ENCODE measurements at regions of chr17 and their contacts with region 1.

Region 1: DNA sequence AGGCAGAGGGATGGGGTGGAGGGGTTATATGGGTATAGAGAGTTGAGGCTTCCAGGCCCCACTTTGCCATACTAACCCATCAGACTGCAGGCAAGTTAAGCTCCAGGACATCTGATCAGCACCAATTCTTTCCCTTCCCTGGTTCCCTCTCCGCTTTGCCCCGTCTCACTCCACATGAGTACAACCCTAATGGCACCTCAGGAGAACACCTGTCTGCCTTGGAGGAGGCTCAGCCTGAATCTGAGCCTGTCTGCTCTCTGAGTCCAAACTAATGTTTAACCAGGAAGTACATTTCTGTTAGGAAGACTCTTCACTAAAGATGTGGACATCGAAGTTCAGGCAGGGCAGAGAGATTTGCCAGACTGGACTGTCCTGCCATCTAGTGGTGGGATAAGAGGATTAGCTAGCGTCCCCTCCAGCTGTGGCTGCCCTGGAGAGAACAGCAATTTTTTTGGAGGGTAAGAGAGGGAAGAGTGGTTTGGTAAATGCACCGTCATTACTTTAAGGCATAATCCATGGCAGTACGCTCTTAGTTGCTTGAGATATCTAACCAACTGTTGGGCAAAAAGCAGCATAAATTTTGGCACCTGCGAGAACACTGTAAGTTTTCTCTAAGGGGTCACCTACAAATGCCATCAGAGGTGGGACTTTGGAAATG is 29.2 kb upstream of the LRRC75A start:
- DNase-seq: peak; percentile 57
- H3K4me3 ChIP-seq: no peak overlapping the region
- CTCF ChIP-seq: peak; percentile 78

Region 2: GRCh38 chr17:16363749-16364536 is 157.3 kb before region 1 on chr17:
- CTCF ChIA-PET with region 1: interaction called, 106 read pairs
- POLR2A ChIA-PET with region 1: no interaction called
- DNase-seq: no peak
- H3K4me3 ChIP-seq: no peak overlapping the region
- CTCF ChIP-seq: peak; percentile 79

Region 3: DNA sequence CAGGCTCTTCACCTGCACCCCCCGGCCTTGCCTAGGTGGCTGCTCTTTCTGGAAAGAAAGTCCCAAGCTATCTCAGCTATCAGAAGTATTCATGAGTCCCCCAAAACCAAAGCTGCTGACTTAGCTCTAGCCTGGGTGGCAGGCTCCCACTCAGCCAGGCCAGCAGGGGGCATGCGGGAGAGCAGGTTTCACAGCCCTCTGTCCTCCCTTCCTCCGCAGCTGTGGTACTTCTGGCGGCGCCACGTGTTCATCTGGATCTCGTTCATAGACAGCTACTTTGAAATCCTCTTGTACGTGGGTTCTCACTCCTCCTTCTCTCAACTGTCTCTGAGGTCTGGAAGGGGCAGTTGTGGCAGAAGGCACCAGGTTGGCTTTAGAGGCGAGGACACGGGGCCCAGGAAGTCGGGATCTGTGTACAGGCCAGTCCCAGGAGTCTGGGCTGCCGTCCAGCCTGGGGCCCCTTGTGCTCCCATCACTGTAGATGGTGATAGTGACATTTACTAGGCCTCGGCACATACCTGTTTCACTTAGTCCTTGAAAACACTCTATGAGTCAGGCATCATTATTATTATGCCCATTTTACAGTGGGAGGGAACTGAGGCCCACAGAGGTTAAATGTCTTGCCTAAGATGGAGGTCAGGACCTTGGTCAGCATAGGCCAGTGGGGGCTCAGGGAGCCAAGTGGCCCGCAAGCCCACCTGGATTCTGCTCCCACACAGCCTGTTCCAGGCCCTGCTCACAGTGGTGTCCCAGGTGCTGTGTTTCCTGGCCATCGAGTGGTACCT is 92.9 kb before region 1 on chr17:
- CTCF ChIA-PET with region 1: interaction called, 34 read pairs
- POLR2A ChIA-PET with region 1: no interaction called
- DNase-seq: no peak
- H3K4me3 ChIP-seq: no peak overlapping the region
- CTCF ChIP-seq: peak; percentile 87

Region 4: DNA sequence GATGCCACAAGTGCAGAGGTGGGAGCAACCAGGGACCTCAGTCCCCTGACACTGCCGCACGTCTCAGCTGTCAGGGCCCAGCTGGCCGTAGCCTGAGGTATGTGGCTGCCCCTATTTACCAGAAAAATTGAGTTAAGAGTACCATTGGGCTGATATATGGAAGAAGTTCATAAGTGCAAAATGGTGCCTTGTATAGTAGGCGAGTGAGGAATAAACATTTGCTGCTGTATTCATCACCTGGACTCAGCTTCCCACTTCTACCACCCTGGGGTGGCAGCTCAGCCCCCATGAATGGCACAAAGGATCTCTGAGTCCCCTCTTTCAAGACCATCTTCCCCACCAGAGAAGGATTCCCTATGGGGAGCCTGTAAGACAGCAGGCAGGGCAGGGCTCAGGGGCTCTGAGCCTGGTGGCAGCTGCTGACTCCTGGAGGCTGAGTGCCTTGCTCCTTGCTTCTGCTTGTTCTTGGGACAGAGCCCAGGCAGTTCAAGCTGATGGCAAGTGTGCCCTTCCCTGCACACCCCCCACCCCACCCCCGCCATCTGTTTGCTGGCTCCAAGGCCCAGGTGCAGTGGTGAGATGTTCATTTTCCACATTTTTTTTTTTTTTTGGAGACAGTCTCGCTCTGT is 76.8 kb before region 1 on chr17:
- CTCF ChIA-PET with region 1: interaction called, 562 read pairs
- POLR2A ChIA-PET with region 1: interaction called, 3 read pairs
- DNase-seq: no peak
- H3K4me3 ChIP-seq: no peak overlapping the region
- CTCF ChIP-seq: no peak

Region 5: GRCh38 chr17:16470265-16470664 is 50.9 kb before region 1 on chr17:
- CTCF ChIA-PET with region 1: interaction called, 13 read pairs
- POLR2A ChIA-PET with region 1: interaction called, 3 read pairs
- DNase-seq: no peak
- H3K4me3 ChIP-seq: no peak overlapping the region
- CTCF ChIP-seq: no peak

Region 6: GRCh38 chr17:16491131-16491702 is 30.0 kb before region 1 on chr17:
- CTCF ChIA-PET with region 1: interaction called, 10 read pairs
- POLR2A ChIA-PET with region 1: interaction called, 3 read pairs
- DNase-seq: no peak
- H3K4me3 ChIP-seq: peak overlapping the region; percentile 49
- CTCF ChIP-seq: no peak

Measured in AG04449 (cell line).